Sigmoid colon (tissue), 7 donors: ENCODE measurements at regions of chr6 and their contacts with region 1.

Region 1: GRCh38 chr6:99745651-99746050 is 139.0 kb downstream of the PRDM13 start:
- DNase-seq: no peak
- H3K4me3 ChIP-seq: no peak overlapping the region
- H3K27ac ChIP-seq: no peak overlapping the region
- H3K4me1 ChIP-seq: peaks cover 0 to 6% (median 0%) of the 10 kb centered on the region in 4 donors
- H3K27me3 ChIP-seq: no peaks in the 10 kb centered on the region
- CTCF ChIP-seq: no peak
- EP300 ChIP-seq: no peak
- POLR2A ChIP-seq: no peak

Region 2: GRCh38 chr6:99350573-99350972 is 395.1 kb before region 1 on chr6:
- intact Hi-C with region 1: no loop called
- DNase-seq: no peak
- H3K4me3 ChIP-seq: peak overlapping the region in 3 of 4 donors; percentile 73 to 90 (median 80)
- H3K27ac ChIP-seq: peak overlapping the region; percentile 92 to 93 (median 93)
- H3K4me1 ChIP-seq: peaks cover 0 to 28% (median 9%) of the 10 kb centered on the region in 4 donors
- H3K27me3 ChIP-seq: peaks cover 0 to 3% (median 0%) of the 10 kb centered on the region in 3 donors
- CTCF ChIP-seq: no peak
- EP300 ChIP-seq: no peak
- POLR2A ChIP-seq: no peak

Region 3: GRCh38 chr6:99467509-99468106 is 278.0 kb before region 1 on chr6:
- intact Hi-C with region 1: loop called (anchors 2 kb)
- DNase-seq: no peak
- H3K4me3 ChIP-seq: no peak overlapping the region
- H3K27ac ChIP-seq: no peak overlapping the region
- H3K4me1 ChIP-seq: no peaks in the 10 kb centered on the region
- H3K27me3 ChIP-seq: no peaks in the 10 kb centered on the region
- CTCF ChIP-seq: peak; percentile 24 to 56 (median 36)
- EP300 ChIP-seq: no peak
- POLR2A ChIP-seq: no peak

Region 4: GRCh38 chr6:99588618-99589289 is 156.9 kb before region 1 on chr6:
- intact Hi-C with region 1: loop called (anchors 5 kb)
- DNase-seq: peak; percentile 78
- H3K4me3 ChIP-seq: peak overlapping the region; percentile 24 to 56 (median 44)
- H3K27ac ChIP-seq: no peak overlapping the region
- H3K4me1 ChIP-seq: peaks cover 0 to 30% (median 26%) of the 10 kb centered on the region in 4 donors
- H3K27me3 ChIP-seq: peaks cover 43 to 86% (median 50%) of the 10 kb centered on the region in 3 donors
- CTCF ChIP-seq: peak in 2 of 4 experiments; percentile 16 to 41
- EP300 ChIP-seq: no peak
- POLR2A ChIP-seq: no peak